AG04449 (cell line): ENCODE measurements at regions of chr11 and their contacts with region 1.

Region 1: GRCh38 chr11:114262681-114263512 is 33.3 kb upstream of the NNMT start:
- DNase-seq: no peak
- H3K4me3 ChIP-seq: no peak overlapping the region
- CTCF ChIP-seq: peak; percentile 72

Region 2: GRCh38 chr11:113875234-113876073 is 387.4 kb before region 1 on chr11 and contains the start of gene USP28:
- CTCF ChIA-PET with region 1: interaction called, 11 read pairs
- POLR2A ChIA-PET with region 1: no interaction called
- DNase-seq: peak; percentile 57
- H3K4me3 ChIP-seq: peak within 1 kb of the TSS; percentile 75
- CTCF ChIP-seq: no peak

Region 3: GRCh38 chr11:113906038-113906437 is 356.9 kb before region 1 on chr11:
- CTCF ChIA-PET with region 1: interaction called, 26 read pairs
- POLR2A ChIA-PET with region 1: no interaction called
- DNase-seq: no peak
- H3K4me3 ChIP-seq: no peak overlapping the region
- CTCF ChIP-seq: no peak

Region 4: DNA sequence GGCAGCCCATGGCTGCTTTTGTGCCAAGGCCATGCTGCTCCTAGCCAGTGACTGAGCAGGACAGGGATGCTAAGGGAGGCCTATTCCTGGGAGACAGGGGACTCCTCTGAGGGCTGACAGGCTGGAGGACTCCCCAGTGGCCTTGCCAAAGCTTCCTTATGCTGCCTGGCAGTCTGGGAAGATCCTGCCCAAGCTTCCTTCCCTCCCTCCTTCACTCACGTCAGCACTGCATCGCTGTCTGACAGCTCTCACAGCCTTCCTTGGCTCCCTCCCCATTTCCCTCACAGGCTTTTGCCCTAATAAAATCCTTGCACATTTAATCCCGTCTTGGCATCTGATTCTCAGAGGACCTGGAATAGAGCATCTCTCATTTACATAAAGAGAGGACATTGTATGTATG is 261.5 kb before region 1 on chr11:
- CTCF ChIA-PET with region 1: interaction called, 251 read pairs
- POLR2A ChIA-PET with region 1: no interaction called
- DNase-seq: no peak
- H3K4me3 ChIP-seq: no peak overlapping the region
- CTCF ChIP-seq: no peak

Region 5: GRCh38 chr11:114036156-114036811 is 226.6 kb before region 1 on chr11:
- CTCF ChIA-PET with region 1: interaction called, 135 read pairs
- POLR2A ChIA-PET with region 1: interaction called, 3 read pairs
- DNase-seq: no peak
- H3K4me3 ChIP-seq: peak overlapping the region; percentile 37
- CTCF ChIP-seq: peak; percentile 79

Region 6: GRCh38 chr11:114280696-114281095 is 17.8 kb after region 1 on chr11:
- CTCF ChIA-PET with region 1: interaction called, 91 read pairs
- POLR2A ChIA-PET with region 1: no interaction called
- DNase-seq: no peak
- H3K4me3 ChIP-seq: no peak overlapping the region
- CTCF ChIP-seq: peak; percentile 83